CD4-positive, alpha-beta T cell (primary cell): ENCODE measurements at regions of chr12 and their contacts with region 1.

Region 1: GRCh38 chr12:34022079-34022830 is at the start of gene ALG10:
- DNase-seq: peak; percentile 91 to 98 (median 95)
- ATAC-seq: peak; percentile 96
- H3K4me3 ChIP-seq: peak within 1 kb of the TSS; percentile 93
- H3K4me3 Mint-ChIP-seq: peak within 1 kb of the TSS; percentile 96
- H3K27ac ChIP-seq: peak within 1 kb of the TSS; percentile 88 to 94
- H3K27ac Mint-ChIP-seq: peak within 1 kb of the TSS; percentile 99
- H3K4me1 ChIP-seq: peaks cover 6% of the 10 kb centered on the region
- H3K4me1 Mint-ChIP-seq: peaks cover 40% of the 10 kb centered on the region
- H3K27me3 ChIP-seq: no peaks in the 10 kb centered on the region
- H3K27me3 Mint-ChIP-seq: no peaks in the 10 kb centered on the region
- CTCF ChIP-seq: peak; percentile 76
- total RNA-seq, gene ALG10: 9.0 to 10.7 TPM

Region 2: GRCh38 chr12:32365473-32366064 is 1656.7 kb before region 1 on chr12:
- CTCF ChIA-PET with region 1: no interaction called
- POLR2A ChIA-PET with region 1: no interaction called
- intact Hi-C with region 1: loop called (anchors 5 kb)
- DNase-seq: peak in 9 of 14 experiments; percentile 2 to 68 (median 23)
- ATAC-seq: peak; percentile 57
- H3K4me3 ChIP-seq: no peak overlapping the region
- H3K4me3 Mint-ChIP-seq: no peak overlapping the region
- H3K27ac ChIP-seq: no peak overlapping the region
- H3K27ac Mint-ChIP-seq: no peak overlapping the region
- H3K4me1 ChIP-seq: no peaks in the 10 kb centered on the region
- H3K4me1 Mint-ChIP-seq: no peaks in the 10 kb centered on the region
- H3K27me3 ChIP-seq: no peaks in the 10 kb centered on the region
- H3K27me3 Mint-ChIP-seq: no peaks in the 10 kb centered on the region
- CTCF ChIP-seq: peak; percentile 71

Region 3: GRCh38 chr12:32455607-32456071 is 1566.6 kb before region 1 on chr12:
- CTCF ChIA-PET with region 1: no interaction called
- POLR2A ChIA-PET with region 1: no interaction called
- intact Hi-C with region 1: loop called in 1 of 2 experiments (anchors 5 kb)
- DNase-seq: peak in 4 of 14 experiments; percentile 9 to 59 (median 54)
- ATAC-seq: no peak
- H3K4me3 ChIP-seq: no peak overlapping the region
- H3K4me3 Mint-ChIP-seq: no peak overlapping the region
- H3K27ac ChIP-seq: no peak overlapping the region
- H3K27ac Mint-ChIP-seq: no peak overlapping the region
- H3K4me1 ChIP-seq: no peaks in the 10 kb centered on the region
- H3K4me1 Mint-ChIP-seq: no peaks in the 10 kb centered on the region
- H3K27me3 ChIP-seq: peaks cover 0 to 5% of the 10 kb centered on the region in 2 experiments
- H3K27me3 Mint-ChIP-seq: no peaks in the 10 kb centered on the region
- CTCF ChIP-seq: peak; percentile 68